Lower leg skin (tissue), 4 donors: ENCODE measurements at regions of chr1 and their contacts with region 1.

Region 1: DNA sequence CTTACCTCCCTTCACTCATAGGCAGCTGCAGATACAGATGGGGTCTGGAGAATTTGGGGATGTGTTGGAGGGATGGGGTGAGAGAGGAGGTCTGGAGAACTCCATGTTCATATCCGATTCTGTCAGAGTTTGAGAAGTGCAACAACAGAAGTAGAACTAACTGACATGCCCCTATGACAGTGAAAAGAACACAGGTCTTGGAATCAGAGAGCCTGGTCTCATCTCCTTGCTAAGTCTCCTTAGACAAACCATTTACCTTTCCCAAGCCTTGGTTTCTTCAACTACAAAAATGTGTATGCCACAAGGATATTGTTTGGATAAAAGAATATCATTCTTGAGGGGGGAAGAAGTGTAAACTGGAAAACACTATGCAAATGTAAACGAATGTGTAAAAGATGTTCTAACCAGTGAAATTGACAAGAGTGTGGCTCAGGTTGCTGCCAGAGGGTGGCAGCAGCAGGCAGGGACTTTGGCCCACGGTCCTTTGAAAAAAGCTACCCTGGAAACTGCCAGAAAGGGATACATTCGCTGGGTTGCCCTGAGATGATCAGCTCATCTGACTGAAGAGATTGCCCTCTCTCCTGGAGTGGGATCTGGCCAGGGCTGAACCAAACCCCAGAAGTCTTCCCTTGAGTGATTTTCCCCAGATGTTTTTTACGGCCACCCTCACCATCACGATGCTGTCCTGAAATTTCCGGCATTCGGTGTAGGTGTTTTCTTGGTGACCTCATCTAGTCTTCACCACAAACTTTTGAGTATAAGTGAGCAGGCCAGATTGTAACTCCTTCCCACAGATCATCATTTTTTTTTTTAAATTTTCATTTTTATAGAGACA is 17.0 kb upstream of the CD2 start:
- DNase-seq: no peak
- H3K4me3 ChIP-seq: no peak overlapping the region
- CTCF ChIP-seq: peak in 1 of 3 donors; percentile 83
- POLR2A ChIP-seq: no peak

Region 2: DNA sequence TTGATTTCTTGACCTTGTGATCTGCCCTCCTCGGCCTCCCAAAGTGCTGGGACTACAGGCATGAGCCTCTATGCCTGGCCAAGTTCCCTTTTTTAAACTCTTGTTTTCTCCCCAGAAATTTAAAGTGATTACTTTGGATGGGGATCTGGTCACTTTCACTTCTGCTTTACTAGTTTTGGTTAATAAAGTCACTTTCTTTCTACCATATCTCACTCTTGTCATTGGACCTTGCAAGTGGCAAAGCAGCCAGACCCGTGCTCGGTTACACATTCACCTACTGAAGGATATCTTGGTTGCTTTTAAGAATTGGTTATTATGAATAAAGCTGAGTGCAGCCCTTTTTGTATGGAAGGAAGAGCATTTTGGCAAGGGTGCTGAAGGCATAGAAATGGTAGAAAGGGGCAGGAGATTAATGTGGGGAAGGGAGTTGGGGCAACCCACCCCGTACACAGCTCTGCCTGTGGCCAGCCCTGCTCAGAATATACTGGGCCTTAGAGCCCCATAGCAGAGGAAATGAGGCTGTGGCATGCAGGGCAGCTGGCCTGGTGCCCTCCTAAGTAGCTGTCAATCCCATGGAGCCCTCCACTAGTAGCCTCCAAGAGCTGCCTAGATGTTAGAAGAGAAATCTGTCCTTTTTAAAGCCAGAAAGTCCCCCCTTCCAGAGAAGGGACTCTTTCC is 57.7 kb after region 1 on chr1:
- intact Hi-C with region 1: loop called (anchors 1 kb)
- DNase-seq: no peak
- H3K4me3 ChIP-seq: no peak overlapping the region
- CTCF ChIP-seq: no peak
- POLR2A ChIP-seq: no peak

Region 3: DNA sequence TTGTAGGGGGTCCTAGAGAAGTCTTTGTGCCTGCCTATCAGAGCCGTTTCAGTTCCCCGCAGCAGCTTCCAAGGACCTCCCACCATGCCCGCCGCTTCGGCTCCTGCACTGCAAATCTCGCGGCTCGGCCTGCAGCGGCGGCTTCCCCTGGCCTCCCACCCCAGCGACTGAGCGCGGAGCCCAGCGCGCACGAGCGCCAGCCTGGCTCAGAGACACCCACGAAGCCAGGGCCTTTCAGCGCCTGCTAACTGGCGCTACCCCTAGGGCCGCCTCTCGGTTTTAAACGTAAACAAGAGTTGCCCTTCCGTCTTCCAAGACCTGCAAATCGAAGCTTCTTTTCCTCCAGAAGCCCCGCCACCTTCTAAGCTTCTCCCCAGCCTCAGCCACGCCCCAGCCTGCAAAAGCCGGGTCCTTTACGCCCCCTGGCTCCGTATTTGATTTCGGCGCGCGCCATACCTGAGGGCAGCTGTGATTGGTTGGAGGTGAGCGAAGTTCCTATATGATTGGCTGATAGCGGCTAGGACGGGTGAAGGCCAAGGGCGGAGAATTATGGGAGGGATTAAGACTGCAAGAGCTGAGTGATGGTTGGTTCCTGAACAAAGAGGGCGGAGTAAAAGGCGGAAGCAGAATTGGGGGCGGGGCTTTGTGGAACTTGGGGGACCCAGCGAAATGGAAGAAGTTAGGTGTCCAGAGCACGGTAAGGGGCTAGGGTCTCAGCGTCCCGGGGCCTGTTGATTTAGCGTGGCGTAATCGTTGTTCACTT is 322.6 kb after region 1 on chr1 and contains the start of gene TTF2:
- intact Hi-C with region 1: loop called (anchors 5 kb)
- DNase-seq: peak; percentile 98
- H3K4me3 ChIP-seq: peak within 1 kb of the TSS; percentile 81
- CTCF ChIP-seq: no peak
- POLR2A ChIP-seq: no peak
- total RNA-seq, gene TTF2: 6.8 to 26.8 (median 20.6) TPM